ENCODE measurements at regions of chr2 and their contacts with region 1.

Region 1: DNA sequence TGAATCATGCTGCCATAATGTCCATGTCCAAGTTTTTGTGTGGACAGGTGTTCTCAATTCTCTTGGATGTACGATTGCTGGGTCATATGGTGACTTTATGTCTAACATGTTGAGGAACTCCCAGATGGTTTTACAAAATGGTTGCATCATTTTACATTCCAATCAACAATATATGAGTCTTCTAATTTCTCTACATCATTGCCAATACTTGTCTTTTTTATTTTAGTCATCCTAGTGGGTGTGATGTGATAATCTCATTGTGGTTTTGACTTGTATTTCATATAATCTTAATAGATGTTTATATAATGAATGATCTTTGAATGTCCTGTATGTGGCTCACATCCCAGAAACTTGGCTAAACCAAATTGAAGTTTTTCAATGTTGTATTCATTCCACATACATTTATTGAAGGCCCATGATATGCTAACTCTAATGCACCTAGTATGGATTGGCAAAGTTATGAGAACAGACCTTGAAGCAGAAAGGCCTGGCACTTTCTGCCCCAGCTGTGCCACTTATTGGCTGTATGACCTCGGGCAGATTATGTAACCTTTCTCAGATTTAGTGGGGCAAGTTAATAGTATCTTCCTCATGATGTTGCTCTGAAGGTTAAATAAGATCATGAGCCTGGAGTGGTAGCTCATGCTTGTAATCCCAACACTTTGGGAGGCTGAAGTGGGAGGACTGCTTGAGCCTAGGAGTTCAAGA is 205.4 kb downstream of the RAB3GAP1 start:
- DNase-seq: no peak
- H3K4me3 ChIP-seq: no peak overlapping the region
- H3K4me3 Mint-ChIP-seq: no peak overlapping the region
- H3K27ac ChIP-seq: no peak overlapping the region
- H3K27ac Mint-ChIP-seq: no peak overlapping the region
- H3K4me1 ChIP-seq: no peaks in the 10 kb centered on the region
- H3K4me1 Mint-ChIP-seq: no peaks in the 10 kb centered on the region
- H3K27me3 ChIP-seq: no peaks in the 10 kb centered on the region
- H3K27me3 Mint-ChIP-seq: no peaks in the 10 kb centered on the region

Region 2: GRCh38 chr2:135202756-135203155 is 54.8 kb before region 1 on chr2:
- CTCF ChIA-PET with region 1: no interaction called
- POLR2A ChIA-PET with region 1: no interaction called
- DNase-seq: no peak
- H3K4me3 ChIP-seq: no peak overlapping the region
- H3K4me3 Mint-ChIP-seq: no peak overlapping the region
- H3K27ac ChIP-seq: no peak overlapping the region
- H3K27ac Mint-ChIP-seq: no peak overlapping the region
- H3K4me1 ChIP-seq: no peaks in the 10 kb centered on the region
- H3K4me1 Mint-ChIP-seq: no peaks in the 10 kb centered on the region
- H3K27me3 ChIP-seq: no peaks in the 10 kb centered on the region
- H3K27me3 Mint-ChIP-seq: no peaks in the 10 kb centered on the region

Region 3: DNA sequence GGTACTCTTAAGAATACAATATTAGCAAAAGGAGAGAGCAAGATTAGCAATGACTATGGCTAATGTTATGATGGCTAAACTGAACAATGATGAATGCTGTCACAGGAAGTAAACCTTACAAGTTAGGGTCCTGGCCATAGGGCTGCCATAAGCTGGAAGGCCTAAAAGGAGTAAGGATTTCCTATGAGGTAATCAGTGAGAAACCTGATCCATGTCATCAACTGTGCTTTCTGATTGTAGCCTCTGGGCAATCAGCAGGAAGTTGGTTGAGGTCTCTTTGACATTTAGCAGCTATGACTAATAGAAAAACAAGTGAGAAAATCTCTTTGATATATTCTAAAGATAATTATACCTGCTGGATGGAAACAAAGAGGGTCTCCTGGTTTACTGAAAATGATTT is 12.5 kb before region 1 on chr2:
- CTCF ChIA-PET with region 1: no interaction called
- POLR2A ChIA-PET with region 1: no interaction called
- DNase-seq: peak in 1 of 5 donors; percentile 16
- H3K4me3 ChIP-seq: no peak overlapping the region
- H3K4me3 Mint-ChIP-seq: no peak overlapping the region
- H3K27ac ChIP-seq: no peak overlapping the region
- H3K27ac Mint-ChIP-seq: peak overlapping the region in 4 of 8 donors; percentile 6 to 84 (median 60)
- H3K4me1 ChIP-seq: no peaks in the 10 kb centered on the region
- H3K4me1 Mint-ChIP-seq: peaks cover 8 to 22% (median 18%) of the 10 kb centered on the region in 3 donors
- H3K27me3 ChIP-seq: no peaks in the 10 kb centered on the region
- H3K27me3 Mint-ChIP-seq: no peaks in the 10 kb centered on the region

Region 4: GRCh38 chr2:135451966-135452365 is 194.4 kb after region 1 on chr2:
- CTCF ChIA-PET with region 1: no interaction called
- POLR2A ChIA-PET with region 1: interaction called, 11 read pairs
- DNase-seq: no peak
- H3K4me3 ChIP-seq: no peak overlapping the region
- H3K4me3 Mint-ChIP-seq: no peak overlapping the region
- H3K27ac ChIP-seq: no peak overlapping the region
- H3K27ac Mint-ChIP-seq: no peak overlapping the region
- H3K4me1 ChIP-seq: no peaks in the 10 kb centered on the region
- H3K4me1 Mint-ChIP-seq: no peaks in the 10 kb centered on the region
- H3K27me3 ChIP-seq: no peaks in the 10 kb centered on the region
- H3K27me3 Mint-ChIP-seq: peaks cover 0 to 2% of the 10 kb centered on the region in 2 donors

Region 5: DNA sequence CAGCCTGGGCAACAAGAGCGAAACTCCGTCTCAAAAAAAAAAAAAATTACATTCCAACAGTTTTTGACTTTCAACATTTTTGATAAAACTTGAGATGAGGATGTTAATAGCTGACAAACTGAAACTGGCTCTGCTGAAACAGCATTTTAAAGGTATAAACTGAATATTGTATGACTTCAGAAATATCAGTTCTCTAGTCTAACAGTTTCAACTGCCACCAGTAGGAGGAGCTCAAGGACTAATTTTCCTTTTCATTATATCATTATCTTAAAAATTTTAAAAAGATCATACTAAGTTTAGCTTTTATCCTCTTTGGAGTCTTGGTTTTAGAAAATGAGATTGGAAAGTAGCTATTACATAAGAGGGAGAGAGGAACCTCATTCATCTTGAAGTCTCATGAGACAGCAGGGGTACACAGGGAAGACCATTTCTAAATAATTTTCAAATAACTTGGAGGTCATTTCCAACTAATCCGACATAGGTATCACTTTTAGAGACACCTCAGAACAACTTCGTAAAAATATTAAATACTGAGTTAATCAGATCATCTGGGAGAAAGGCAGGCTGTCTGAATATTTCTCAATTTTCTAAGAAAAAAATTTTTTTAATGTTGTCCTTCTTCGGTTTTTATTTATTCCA is 656.3 kb after region 1 on chr2:
- CTCF ChIA-PET with region 1: no interaction called
- POLR2A ChIA-PET with region 1: no interaction called
- DNase-seq: peak in 4 of 5 donors; percentile 20 to 58 (median 30)
- H3K4me3 ChIP-seq: no peak overlapping the region
- H3K4me3 Mint-ChIP-seq: no peak overlapping the region
- H3K27ac ChIP-seq: no peak overlapping the region
- H3K27ac Mint-ChIP-seq: peak overlapping the region; percentile 50 to 93 (median 67)
- H3K4me1 ChIP-seq: no peaks in the 10 kb centered on the region
- H3K4me1 Mint-ChIP-seq: peaks cover 0 to 9% (median 4%) of the 10 kb centered on the region in 3 donors
- H3K27me3 ChIP-seq: no peaks in the 10 kb centered on the region
- H3K27me3 Mint-ChIP-seq: no peaks in the 10 kb centered on the region